ENCODE measurements at regions of chr16 and their contacts with region 1.

Region 1: GRCh38 chr16:5820472-5820871 is 722.9 kb upstream of the EEF2KMT start:
- DNase-seq: no peak
- H3K4me3 ChIP-seq: no peak overlapping the region
- H3K27ac ChIP-seq: no peak overlapping the region
- H3K4me1 ChIP-seq: no peaks in the 10 kb centered on the region
- H3K27me3 ChIP-seq: no peaks in the 10 kb centered on the region
- CTCF ChIP-seq: no peak

Region 2: DNA sequence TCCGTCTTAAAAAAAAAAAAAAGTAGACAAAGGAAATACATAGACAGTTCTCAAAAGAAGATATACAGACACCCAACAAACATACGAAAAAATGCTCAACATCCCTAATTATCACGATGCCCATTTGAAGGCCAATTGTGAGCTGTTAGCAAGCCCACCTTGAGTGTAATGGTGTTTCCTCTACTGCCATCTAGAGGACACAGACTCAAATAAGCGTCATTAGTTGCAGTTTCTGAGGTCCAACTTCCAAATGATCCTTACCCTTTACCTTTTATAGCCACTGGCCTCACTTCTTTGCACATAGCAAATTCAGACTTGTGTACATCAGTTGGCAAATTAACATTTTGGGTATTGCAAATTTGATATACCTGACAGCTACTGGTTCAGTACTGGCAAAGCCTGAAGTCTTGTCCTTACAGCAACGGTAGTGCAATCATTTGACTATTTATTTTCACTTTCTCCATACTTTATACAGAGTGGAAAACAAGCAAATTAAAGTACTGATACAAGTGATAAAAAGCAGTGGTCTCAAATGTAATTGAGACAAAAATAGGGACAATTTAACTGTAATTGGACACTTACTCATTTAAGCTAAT is 186.5 kb before region 1 on chr16:
- dilution Hi-C with region 1: no loop called
- DNase-seq: no peak
- H3K4me3 ChIP-seq: no peak overlapping the region
- H3K27ac ChIP-seq: no peak overlapping the region
- H3K4me1 ChIP-seq: no peaks in the 10 kb centered on the region
- H3K27me3 ChIP-seq: no peaks in the 10 kb centered on the region
- CTCF ChIP-seq: peak in 1 of 3 experiments; percentile 29

Region 3: GRCh38 chr16:5709889-5710288 is 110.6 kb before region 1 on chr16:
- dilution Hi-C with region 1: loop called (anchors 25 kb)
- DNase-seq: no peak
- H3K4me3 ChIP-seq: no peak overlapping the region
- H3K27ac ChIP-seq: no peak overlapping the region
- H3K4me1 ChIP-seq: no peaks in the 10 kb centered on the region
- H3K27me3 ChIP-seq: no peaks in the 10 kb centered on the region
- CTCF ChIP-seq: no peak

Region 4: DNA sequence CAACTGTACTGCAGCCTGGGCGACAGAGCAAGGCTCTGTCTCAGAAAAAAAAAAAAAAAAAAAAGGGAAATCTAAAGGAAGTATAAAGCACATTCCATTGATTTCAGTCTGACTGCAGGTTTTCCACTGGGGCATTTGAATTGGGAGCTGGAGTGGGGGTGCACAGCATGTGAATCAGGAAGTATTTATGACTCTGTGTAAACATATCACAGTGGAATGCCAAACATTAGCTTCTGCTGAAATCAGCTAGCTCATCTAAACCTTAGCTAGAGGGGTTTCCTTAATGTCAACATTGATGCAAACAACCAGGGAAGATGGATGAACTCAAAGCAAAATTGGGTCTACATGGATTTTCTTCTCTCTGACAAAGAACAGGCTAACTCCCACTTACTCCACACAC is 81.9 kb before region 1 on chr16:
- dilution Hi-C with region 1: no loop called
- DNase-seq: no peak
- H3K4me3 ChIP-seq: no peak overlapping the region
- H3K27ac ChIP-seq: no peak overlapping the region
- H3K4me1 ChIP-seq: no peaks in the 10 kb centered on the region
- H3K27me3 ChIP-seq: no peaks in the 10 kb centered on the region
- CTCF ChIP-seq: no peak

Region 5: GRCh38 chr16:5865236-5865635 is 44.8 kb after region 1 on chr16:
- dilution Hi-C with region 1: no loop called
- DNase-seq: no peak
- H3K4me3 ChIP-seq: no peak overlapping the region
- H3K27ac ChIP-seq: no peak overlapping the region
- H3K4me1 ChIP-seq: no peaks in the 10 kb centered on the region
- H3K27me3 ChIP-seq: no peaks in the 10 kb centered on the region
- CTCF ChIP-seq: no peak

Region 6: DNA sequence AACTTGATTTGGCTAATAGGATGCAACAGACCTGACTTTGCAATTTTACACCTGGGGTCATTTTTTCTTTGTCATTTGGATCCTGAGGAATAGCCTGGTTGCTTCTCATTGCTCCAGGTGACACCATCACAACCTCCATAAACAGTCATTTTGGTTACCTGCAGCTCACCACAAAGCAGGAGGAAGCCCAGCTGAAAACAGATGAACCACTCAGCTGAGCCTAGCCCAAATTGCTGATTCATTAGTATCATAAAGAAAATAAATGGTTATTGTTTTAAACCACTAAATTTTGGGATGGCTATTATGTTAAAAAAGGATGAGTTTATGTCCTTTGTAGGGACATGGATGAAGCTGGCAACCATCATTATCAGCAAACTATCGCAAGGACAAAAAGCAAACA is 118.1 kb after region 1 on chr16:
- dilution Hi-C with region 1: no loop called
- DNase-seq: no peak
- H3K4me3 ChIP-seq: no peak overlapping the region
- H3K27ac ChIP-seq: no peak overlapping the region
- H3K4me1 ChIP-seq: no peaks in the 10 kb centered on the region
- H3K27me3 ChIP-seq: no peaks in the 10 kb centered on the region
- CTCF ChIP-seq: no peak